GM10248 (cell line): ENCODE measurements at regions of chr3 and their contacts with region 1.

Region 1: GRCh38 chr3:123412811-123413604 is 35.9 kb downstream of the ADCY5 start:
- DNase-seq: no peak
- CTCF ChIP-seq: no peak

Region 2: GRCh38 chr3:123401836-123402530 is 11.0 kb before region 1 on chr3:
- CTCF ChIA-PET with region 1: interaction called, 19 read pairs
- POLR2A ChIA-PET with region 1: no interaction called
- DNase-seq: no peak
- CTCF ChIP-seq: no peak